HCT116 (cell line): ENCODE measurements at regions of chr7 and their contacts with region 1.

Region 1: GRCh38 chr7:150356265-150356897 is 12.2 kb upstream of the REPIN1 start:
- DNase-seq: peak; percentile 36
- ATAC-seq: peak; percentile 45
- H3K4me3 ChIP-seq: no peak overlapping the region
- H3K27ac ChIP-seq: no peak overlapping the region
- H3K4me1 ChIP-seq: peaks cover 0 to 12% of the 10 kb centered on the region in 2 experiments; a peak in 2 of 4 replicates
- H3K27me3 ChIP-seq: no peaks in the 10 kb centered on the region
- CTCF ChIP-seq: peak; percentile 60 to 82 (median 77); a peak in 5 of 6 replicates
- POLR2A ChIP-seq: no peak
- RAD21 ChIP-seq: peak; percentile 70

Region 2: DNA sequence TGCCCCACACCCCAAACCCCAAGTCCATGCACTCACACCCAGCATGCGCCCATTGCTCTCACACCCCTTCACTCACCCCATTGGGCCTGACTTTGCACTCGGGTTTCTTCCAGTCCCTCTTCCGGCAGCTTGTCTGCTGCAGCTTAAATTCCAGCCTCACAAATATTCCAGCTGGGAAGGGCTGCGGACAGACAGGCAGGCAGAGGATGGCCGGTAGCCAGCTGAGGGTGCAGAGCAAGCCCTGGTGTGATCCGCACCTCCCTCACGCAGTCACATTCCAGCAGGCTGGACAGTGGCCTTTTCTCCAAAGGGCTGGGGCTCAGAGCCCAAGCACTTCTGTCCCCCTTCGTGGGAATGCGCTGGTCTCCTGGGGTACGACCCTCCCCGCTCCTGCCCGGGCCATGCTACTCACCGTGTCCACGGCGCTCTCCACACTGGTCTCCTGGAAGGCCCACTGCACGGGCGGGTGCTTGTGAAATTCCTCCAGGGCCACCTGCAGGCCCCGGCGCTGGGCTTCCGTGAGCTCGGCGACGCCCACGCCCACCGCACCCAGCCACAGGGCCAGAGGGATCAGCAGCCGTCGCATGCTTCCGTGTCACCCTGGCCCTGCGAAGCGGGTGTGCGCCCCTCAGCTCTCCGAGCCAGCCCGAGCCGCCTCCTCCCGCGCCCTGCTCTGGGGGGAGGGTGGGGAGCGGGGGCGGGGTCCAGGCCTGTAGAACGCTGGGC is 16.2 kb before region 1 on chr7:
- CTCF ChIA-PET with region 1: no interaction called
- POLR2A ChIA-PET with region 1: no interaction called
- RAD21 ChIA-PET with region 1: no interaction called
- intact Hi-C with region 1: no loop called
- DNase-seq: no peak
- ATAC-seq: no peak
- H3K4me3 ChIP-seq: no peak overlapping the region
- H3K27ac ChIP-seq: no peak overlapping the region
- H3K4me1 ChIP-seq: no peaks in the 10 kb centered on the region
- H3K27me3 ChIP-seq: no peaks in the 10 kb centered on the region
- CTCF ChIP-seq: no peak
- POLR2A ChIP-seq: no peak
- RAD21 ChIP-seq: no peak

Region 3: GRCh38 chr7:150420987-150421674 is 64.8 kb after region 1 on chr7:
- CTCF ChIA-PET with region 1: interaction called, 6 read pairs
- POLR2A ChIA-PET with region 1: no interaction called
- RAD21 ChIA-PET with region 1: no interaction called
- intact Hi-C with region 1: loop called (anchors 1 kb)
- DNase-seq: peak; percentile 77
- ATAC-seq: peak; percentile 99
- H3K4me3 ChIP-seq: no peak overlapping the region
- H3K27ac ChIP-seq: no peak overlapping the region
- H3K4me1 ChIP-seq: peaks cover 5 to 10% of the 10 kb centered on the region in 2 experiments; a peak in 3 of 4 replicates
- H3K27me3 ChIP-seq: no peaks in the 10 kb centered on the region
- CTCF ChIP-seq: peak; percentile 84 to 96 (median 93)
- POLR2A ChIP-seq: no peak
- RAD21 ChIP-seq: peak; percentile 95

Region 4: GRCh38 chr7:151993977-151994676 is 1637.7 kb after region 1 on chr7:
- CTCF ChIA-PET with region 1: no interaction called
- POLR2A ChIA-PET with region 1: no interaction called
- RAD21 ChIA-PET with region 1: no interaction called
- intact Hi-C with region 1: no loop called
- DNase-seq: no peak
- ATAC-seq: no peak
- H3K4me3 ChIP-seq: no peak overlapping the region
- H3K27ac ChIP-seq: no peak overlapping the region
- H3K4me1 ChIP-seq: peaks cover 2 to 19% of the 10 kb centered on the region in 2 experiments; a peak in 3 of 4 replicates
- H3K27me3 ChIP-seq: no peaks in the 10 kb centered on the region
- CTCF ChIP-seq: no peak
- POLR2A ChIP-seq: no peak
- RAD21 ChIP-seq: no peak